Left ventricle myocardium superior (tissue), 1 donor: ENCODE measurements at regions of chr1 and their contacts with region 1.

Region 1: DNA sequence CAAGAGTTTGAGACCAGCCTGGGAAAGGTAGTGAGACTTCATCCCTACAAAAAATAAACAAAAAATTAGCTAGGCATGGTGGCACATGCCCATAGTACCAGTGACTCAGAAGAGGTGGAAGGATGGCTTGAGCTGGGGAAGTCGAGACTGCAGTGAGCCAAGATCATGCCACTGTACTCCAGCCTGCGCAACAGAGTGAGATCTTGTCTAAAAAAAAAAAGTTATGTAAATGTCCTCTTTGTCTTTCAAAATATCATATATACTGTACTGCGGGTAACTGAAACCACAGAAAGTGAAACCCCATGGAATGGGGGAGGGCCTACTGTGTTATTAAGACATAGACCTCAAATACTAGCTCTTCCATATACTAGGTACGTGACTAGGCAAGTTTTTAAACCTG is 20.8 kb downstream of the ACADM start:
- DNase-seq: no peak
- ATAC-seq: no peak

Region 2: GRCh38 chr1:75579046-75579445 is 166.2 kb before region 1 on chr1:
- intact Hi-C with region 1: no loop called
- DNase-seq: no peak
- ATAC-seq: no peak

Region 3: GRCh38 chr1:75796376-75797272 is 51.3 kb after region 1 on chr1 and contains the start of gene MSH4:
- intact Hi-C with region 1: loop called (anchors 10 kb)
- DNase-seq: no peak
- ATAC-seq: peak; percentile 55
- total RNA-seq, gene MSH4: 0.40 TPM